ENCODE measurements at regions of chr3 and their contacts with region 1.

Region 1: GRCh38 chr3:3516996-3517395 is 282.2 kb upstream of the LRRN1 start:
- DNase-seq: no peak
- H3K4me3 ChIP-seq: no peak overlapping the region
- H3K27ac ChIP-seq: no peak overlapping the region
- H3K4me1 ChIP-seq: no peaks in the 10 kb centered on the region
- H3K27me3 ChIP-seq: no peaks in the 10 kb centered on the region
- CTCF ChIP-seq: no peak

Region 2: GRCh38 chr3:3015185-3016089 is 501.6 kb before region 1 on chr3:
- intact Hi-C with region 1: loop called (anchors 5 kb)
- DNase-seq: no peak
- H3K4me3 ChIP-seq: no peak overlapping the region
- H3K27ac ChIP-seq: no peak overlapping the region
- H3K4me1 ChIP-seq: peaks cover 0 to 8% (median 0%) of the 10 kb centered on the region in 4 donors
- H3K27me3 ChIP-seq: no peaks in the 10 kb centered on the region
- CTCF ChIP-seq: peak in 1 of 2 experiments; percentile 32

Region 3: GRCh38 chr3:3627114-3627513 is 110.1 kb after region 1 on chr3:
- intact Hi-C with region 1: no loop called
- DNase-seq: no peak
- H3K4me3 ChIP-seq: no peak overlapping the region
- H3K27ac ChIP-seq: no peak overlapping the region
- H3K4me1 ChIP-seq: no peaks in the 10 kb centered on the region
- H3K27me3 ChIP-seq: no peaks in the 10 kb centered on the region
- CTCF ChIP-seq: no peak

Measured in tibial artery (tissue), 4 donors.